Vagina (tissue), 2 donors: ENCODE measurements at regions of chr1 and their contacts with region 1.

Region 1: GRCh38 chr1:152001391-152002249 is 8.0 kb upstream of the S100A10 start:
- DNase-seq: no peak
- H3K4me3 ChIP-seq: no peak overlapping the region
- H3K27ac ChIP-seq: peak overlapping the region; percentile 63
- H3K4me1 ChIP-seq: peaks cover 21% of the 10 kb centered on the region
- H3K27me3 ChIP-seq: no peaks in the 10 kb centered on the region
- CTCF ChIP-seq: peak; percentile 85 to 96 (median 87)
- POLR2A ChIP-seq: no peak

Region 2: GRCh38 chr1:151728151-151729054 is 273.2 kb before region 1 on chr1:
- intact Hi-C with region 1: no loop called
- DNase-seq: no peak
- H3K4me3 ChIP-seq: no peak overlapping the region
- H3K27ac ChIP-seq: peak overlapping the region; percentile 11
- H3K4me1 ChIP-seq: no peaks in the 10 kb centered on the region
- H3K27me3 ChIP-seq: no peaks in the 10 kb centered on the region
- CTCF ChIP-seq: no peak
- POLR2A ChIP-seq: no peak

Region 3: DNA sequence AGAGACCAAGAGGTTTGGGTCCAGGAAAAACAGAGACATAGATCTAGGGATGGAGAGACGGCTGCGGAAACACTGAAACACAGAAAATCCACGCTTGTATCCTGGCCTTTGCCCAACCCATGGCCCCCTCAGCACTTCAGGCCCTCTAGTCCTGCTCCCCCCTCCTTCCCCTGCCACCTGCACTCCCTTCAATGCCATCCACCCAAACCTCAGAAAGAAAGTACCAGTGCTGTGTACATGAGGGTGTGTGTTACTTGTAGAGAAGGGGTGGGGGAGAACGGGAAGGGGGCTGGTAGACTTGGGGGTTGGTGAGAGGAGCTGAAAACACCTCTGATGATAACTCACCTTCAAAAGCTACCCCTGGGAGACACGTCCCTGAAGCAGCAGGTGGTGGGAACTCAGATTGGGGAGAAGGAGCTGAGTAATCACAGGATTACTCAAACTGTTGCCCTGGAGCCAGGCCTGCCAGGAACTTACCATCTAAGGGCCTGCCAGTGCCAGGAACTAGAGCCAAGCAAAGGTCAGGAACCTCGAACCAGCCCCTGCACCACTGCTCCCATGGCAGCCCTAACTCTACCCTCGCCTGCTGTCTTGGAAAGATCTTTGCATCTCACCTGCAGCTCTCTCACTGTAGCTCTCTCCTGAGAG is 181.5 kb before region 1 on chr1:
- intact Hi-C with region 1: no loop called
- DNase-seq: no peak
- H3K4me3 ChIP-seq: no peak overlapping the region
- H3K27ac ChIP-seq: no peak overlapping the region
- H3K4me1 ChIP-seq: no peaks in the 10 kb centered on the region
- H3K27me3 ChIP-seq: no peaks in the 10 kb centered on the region
- CTCF ChIP-seq: no peak
- POLR2A ChIP-seq: no peak

Region 4: DNA sequence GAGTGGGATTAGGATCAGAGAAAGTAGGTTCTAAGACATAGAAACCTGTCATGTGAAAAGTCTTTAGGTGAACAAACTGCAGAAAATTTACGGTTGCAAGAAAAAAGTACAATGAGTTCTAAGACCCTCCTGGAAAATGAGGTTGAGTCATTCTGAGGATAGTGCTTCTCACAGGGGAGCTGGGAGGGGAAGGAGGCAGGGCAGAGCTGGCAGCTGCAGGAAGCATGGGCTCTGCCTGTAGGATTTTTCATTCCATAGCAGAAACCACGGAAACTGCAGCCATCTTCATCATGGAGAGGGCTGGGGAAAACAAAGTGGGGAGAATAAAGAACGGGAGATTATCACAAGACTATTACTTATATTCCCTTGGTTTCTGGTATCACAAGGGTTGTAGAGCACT is 66.5 kb before region 1 on chr1:
- intact Hi-C with region 1: loop called (anchors 5 kb)
- DNase-seq: no peak
- H3K4me3 ChIP-seq: no peak overlapping the region
- H3K27ac ChIP-seq: no peak overlapping the region
- H3K4me1 ChIP-seq: no peaks in the 10 kb centered on the region
- H3K27me3 ChIP-seq: no peaks in the 10 kb centered on the region
- CTCF ChIP-seq: no peak
- POLR2A ChIP-seq: no peak

Region 5: DNA sequence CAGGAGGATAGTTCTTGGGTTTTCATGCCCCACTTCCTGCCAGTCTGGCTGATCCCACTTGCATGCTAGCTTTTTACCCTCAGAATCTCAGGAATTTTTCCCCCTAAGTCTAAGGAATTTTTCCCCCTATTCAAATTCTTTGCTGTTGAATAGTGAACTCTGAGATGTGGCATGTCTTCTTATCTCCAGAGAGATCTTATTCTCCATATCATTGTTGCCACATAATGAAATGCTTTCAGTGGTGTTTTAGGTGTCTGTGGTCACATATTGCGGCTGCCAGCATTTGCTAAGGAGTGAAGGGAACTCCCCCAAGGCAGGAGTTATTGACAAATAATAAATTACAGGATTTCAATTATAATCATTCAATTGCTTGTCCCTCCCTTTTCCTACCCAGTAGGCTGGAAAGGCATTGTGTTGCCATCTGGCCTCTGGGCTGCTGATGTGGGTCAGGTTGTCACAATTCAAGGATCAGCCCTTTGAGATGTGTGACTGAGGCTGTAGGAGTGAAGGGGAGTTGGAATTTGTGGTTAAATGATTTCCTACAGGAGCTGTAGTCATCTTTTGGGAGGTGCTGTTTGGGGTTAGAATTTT is 327.3 kb after region 1 on chr1:
- intact Hi-C with region 1: no loop called
- DNase-seq: no peak
- H3K4me3 ChIP-seq: no peak overlapping the region
- H3K27ac ChIP-seq: no peak overlapping the region
- H3K4me1 ChIP-seq: no peaks in the 10 kb centered on the region
- H3K27me3 ChIP-seq: no peaks in the 10 kb centered on the region
- CTCF ChIP-seq: no peak
- POLR2A ChIP-seq: no peak